ENCODE measurements at regions of chrX and their contacts with region 1.

Region 1: GRCh38 chrX:129144172-129145038 is 378.9 kb downstream of the SMARCA1 start:
- DNase-seq: peak; percentile 94
- ATAC-seq: peak; percentile 82
- H3K4me3 ChIP-seq: no peak overlapping the region; a peak in 1 of 6 replicates
- H3K27ac ChIP-seq: peak overlapping the region; percentile 99
- H3K4me1 ChIP-seq: peaks cover 95% of the 10 kb centered on the region
- H3K27me3 ChIP-seq: no peaks in the 10 kb centered on the region
- CTCF ChIP-seq: no peak
- EP300 ChIP-seq: peak; percentile 40 to 99; a peak in 3 of 4 replicates
- POLR2A ChIP-seq: 0 out of 4 replicates have a peak, but pooled peaks of 1 of the 2 experiments have one; percentile 14
- RAD21 ChIP-seq: no peak

Region 2: GRCh38 chrX:128870361-128870760 is 274.0 kb before region 1 on chrX:
- CTCF ChIA-PET with region 1: no interaction called
- POLR2A ChIA-PET with region 1: no interaction called
- in situ Hi-C with region 1: no loop called
- intact Hi-C with region 1: no loop called
- DNase-seq: no peak
- ATAC-seq: no peak
- H3K4me3 ChIP-seq: no peak overlapping the region
- H3K27ac ChIP-seq: no peak overlapping the region
- H3K4me1 ChIP-seq: no peaks in the 10 kb centered on the region
- H3K27me3 ChIP-seq: no peaks in the 10 kb centered on the region
- CTCF ChIP-seq: no peak
- EP300 ChIP-seq: no peak
- POLR2A ChIP-seq: no peak
- RAD21 ChIP-seq: no peak

Region 3: DNA sequence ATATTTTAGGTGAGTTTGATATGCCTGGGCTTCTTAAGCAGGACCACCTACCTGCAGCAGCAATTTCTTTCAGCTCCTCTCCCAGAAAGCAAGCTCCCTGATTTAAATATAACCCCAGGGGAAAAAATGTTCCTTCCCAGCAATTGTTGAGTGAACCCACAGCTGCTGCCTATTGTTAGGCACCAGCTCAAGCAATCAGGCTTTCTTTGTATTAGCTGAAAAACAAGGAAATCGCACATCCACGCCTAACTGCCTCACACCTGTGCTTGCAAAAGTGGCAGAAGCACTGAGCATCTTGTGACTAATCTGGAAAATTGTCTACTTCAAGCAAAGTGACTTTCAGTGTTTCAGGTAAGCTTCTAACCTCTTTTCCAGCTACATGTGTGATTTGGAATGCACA is 53.3 kb before region 1 on chrX:
- CTCF ChIA-PET with region 1: no interaction called
- POLR2A ChIA-PET with region 1: no interaction called
- in situ Hi-C with region 1: no loop called
- intact Hi-C with region 1: loop called (anchors 2 kb)
- DNase-seq: no peak
- ATAC-seq: no peak
- H3K4me3 ChIP-seq: no peak overlapping the region
- H3K27ac ChIP-seq: no peak overlapping the region
- H3K4me1 ChIP-seq: peaks cover 41% of the 10 kb centered on the region
- H3K27me3 ChIP-seq: no peaks in the 10 kb centered on the region
- CTCF ChIP-seq: no peak
- EP300 ChIP-seq: no peak
- POLR2A ChIP-seq: no peak
- RAD21 ChIP-seq: no peak

Region 4: DNA sequence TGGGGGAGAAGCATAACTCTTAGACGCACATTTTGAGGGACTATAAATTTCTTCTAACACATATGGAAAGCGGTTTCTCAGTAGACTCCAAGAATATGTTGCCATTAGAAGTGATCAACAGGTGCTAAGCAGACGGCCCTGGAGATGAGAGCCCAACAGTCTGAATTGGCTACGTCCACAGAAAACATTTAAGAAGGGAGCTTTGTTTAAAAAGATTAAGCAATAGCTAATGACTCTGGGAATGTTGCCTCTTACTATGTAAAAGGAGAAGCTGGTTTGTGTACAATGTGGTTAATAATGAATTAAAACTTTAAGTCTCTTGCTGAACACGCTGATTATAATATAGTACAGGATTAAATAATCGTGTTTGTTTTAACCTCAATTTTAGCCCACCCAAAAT is 20.6 kb before region 1 on chrX:
- CTCF ChIA-PET with region 1: no interaction called
- POLR2A ChIA-PET with region 1: interaction called, 30 read pairs
- in situ Hi-C with region 1: no loop called
- intact Hi-C with region 1: no loop called
- DNase-seq: peak; percentile 82
- ATAC-seq: peak; percentile 75
- H3K4me3 ChIP-seq: no peak overlapping the region
- H3K27ac ChIP-seq: peak overlapping the region; percentile 68
- H3K4me1 ChIP-seq: peaks cover 60% of the 10 kb centered on the region
- H3K27me3 ChIP-seq: no peaks in the 10 kb centered on the region
- CTCF ChIP-seq: no peak
- EP300 ChIP-seq: peak in 1 of 2 experiments; percentile 74; a peak in 2 of 4 replicates
- POLR2A ChIP-seq: no peak
- RAD21 ChIP-seq: no peak